Panc1 (cell line): ENCODE measurements at regions of chr13 and their contacts with region 1.

Region 1: GRCh38 chr13:108895220-108895704 is 265.9 kb downstream of the MYO16 start:
- DNase-seq: no peak
- ATAC-seq: no peak
- H3K4me3 ChIP-seq: no peak overlapping the region
- H3K27ac ChIP-seq: no peak overlapping the region
- H3K4me1 ChIP-seq: no peaks in the 10 kb centered on the region
- H3K27me3 ChIP-seq: no peaks in the 10 kb centered on the region
- CTCF ChIP-seq: peak; percentile 24; the same call in 1 of the 2 replicates

Region 2: GRCh38 chr13:108227651-108228272 is 667.5 kb before region 1 on chr13:
- CTCF ChIA-PET with region 1: no interaction called
- POLR2A ChIA-PET with region 1: no interaction called
- in situ Hi-C with region 1: no loop called
- intact Hi-C with region 1: loop called (anchors 5 kb)
- DNase-seq: no peak
- ATAC-seq: no peak
- H3K4me3 ChIP-seq: no peak overlapping the region
- H3K27ac ChIP-seq: no peak overlapping the region
- H3K4me1 ChIP-seq: no peaks in the 10 kb centered on the region
- H3K27me3 ChIP-seq: no peaks in the 10 kb centered on the region
- CTCF ChIP-seq: peak; percentile 53; the same call in 1 of the 2 replicates

Region 3: GRCh38 chr13:108322206-108322824 is 572.9 kb before region 1 on chr13:
- CTCF ChIA-PET with region 1: interaction called, 3 read pairs
- POLR2A ChIA-PET with region 1: no interaction called
- in situ Hi-C with region 1: no loop called
- intact Hi-C with region 1: loop called (anchors 1 kb)
- DNase-seq: peak; percentile 10
- ATAC-seq: peak; percentile 76
- H3K4me3 ChIP-seq: no peak overlapping the region
- H3K27ac ChIP-seq: no peak overlapping the region
- H3K4me1 ChIP-seq: no peaks in the 10 kb centered on the region
- H3K27me3 ChIP-seq: no peaks in the 10 kb centered on the region
- CTCF ChIP-seq: peak; percentile 57; the same call in 1 of the 2 replicates

Region 4: DNA sequence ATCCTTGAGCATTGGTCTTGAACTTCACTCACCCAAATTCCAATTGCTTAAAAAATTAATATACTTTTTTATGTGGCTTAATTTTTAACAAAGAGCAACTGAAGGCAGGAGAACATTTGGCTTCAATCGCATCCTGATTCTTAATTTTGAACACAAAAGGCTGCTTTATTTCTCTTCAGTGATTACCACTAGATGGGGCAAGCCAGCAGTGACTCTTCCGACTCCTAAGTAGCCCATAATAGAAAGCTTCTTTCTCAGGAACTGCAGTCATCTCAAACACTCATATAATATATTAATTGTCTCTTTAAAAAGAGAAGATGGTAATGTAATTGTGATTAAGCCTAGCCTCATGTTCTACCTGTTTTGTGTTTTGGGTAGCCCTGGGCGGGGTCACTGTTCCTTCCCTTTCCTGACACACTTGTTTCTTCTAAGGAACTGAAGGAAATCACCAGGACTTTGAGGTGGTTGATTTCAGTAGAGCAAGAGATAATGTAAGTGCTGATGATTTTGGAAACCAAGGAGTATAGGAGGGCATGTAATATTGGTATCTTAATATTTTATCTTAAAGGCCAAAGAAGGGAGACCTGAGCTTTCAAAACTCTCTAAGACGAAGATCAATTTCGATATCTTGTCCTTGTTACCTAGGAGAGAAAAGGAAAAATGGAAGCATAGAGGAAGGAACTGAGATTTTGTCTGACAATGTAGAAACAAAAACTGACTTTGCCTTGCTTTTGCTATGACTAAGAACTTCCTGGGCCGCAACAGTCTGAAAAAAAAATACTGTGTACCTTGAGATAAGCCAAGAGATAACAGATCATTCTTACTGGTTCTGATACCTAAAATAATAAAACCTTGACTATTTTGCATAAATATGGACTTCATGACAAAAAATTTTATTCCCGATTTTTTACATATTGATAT is 552.6 kb before region 1 on chr13:
- CTCF ChIA-PET with region 1: interaction called, 7 read pairs
- POLR2A ChIA-PET with region 1: no interaction called
- in situ Hi-C with region 1: no loop called
- intact Hi-C with region 1: loop called (anchors 1 kb)
- DNase-seq: peak; percentile 4
- ATAC-seq: peak; percentile 71; the same call in 1 of the 2 replicates
- H3K4me3 ChIP-seq: no peak overlapping the region
- H3K27ac ChIP-seq: no peak overlapping the region
- H3K4me1 ChIP-seq: no peaks in the 10 kb centered on the region
- H3K27me3 ChIP-seq: no peaks in the 10 kb centered on the region
- CTCF ChIP-seq: peak; percentile 51; the same call in 1 of the 2 replicates

Region 5: GRCh38 chr13:108609353-108609752 is 285.9 kb before region 1 on chr13:
- CTCF ChIA-PET with region 1: interaction called, 4 read pairs
- POLR2A ChIA-PET with region 1: no interaction called
- in situ Hi-C with region 1: no loop called
- intact Hi-C with region 1: loop called (anchors 2 kb)
- DNase-seq: no peak
- ATAC-seq: no peak
- H3K4me3 ChIP-seq: no peak overlapping the region
- H3K27ac ChIP-seq: no peak overlapping the region
- H3K4me1 ChIP-seq: no peaks in the 10 kb centered on the region
- H3K27me3 ChIP-seq: no peaks in the 10 kb centered on the region
- CTCF ChIP-seq: peak; percentile 23; the same call in 1 of the 2 replicates